CD8-positive, alpha-beta T cell (primary cell): ENCODE measurements at regions of chr17 and their contacts with region 1.

Region 1: GRCh38 chr17:57671667-57672632 is 73.1 kb downstream of the CCDC182 start:
- DNase-seq: peak; percentile 46 to 87 (median 75)
- ATAC-seq: peak; percentile 87
- H3K4me3 ChIP-seq: no peak overlapping the region
- H3K4me3 Mint-ChIP-seq: peak overlapping the region; percentile 54
- H3K27ac ChIP-seq: peak overlapping the region; percentile 28 to 45
- H3K27ac Mint-ChIP-seq: peak overlapping the region; percentile 91
- H3K4me1 ChIP-seq: peaks cover 36% of the 10 kb centered on the region
- H3K4me1 Mint-ChIP-seq: peaks cover 45% of the 10 kb centered on the region
- H3K27me3 ChIP-seq: no peaks in the 10 kb centered on the region
- H3K27me3 Mint-ChIP-seq: no peaks in the 10 kb centered on the region
- CTCF ChIP-seq: peak; percentile 81

Region 2: GRCh38 chr17:57130761-57131461 is 541.0 kb before region 1 on chr17:
- CTCF ChIA-PET with region 1: interaction called, 3 read pairs
- POLR2A ChIA-PET with region 1: no interaction called
- intact Hi-C with region 1: loop called in 1 of 2 experiments (anchors 1 kb)
- DNase-seq: peak; percentile 71 to 88 (median 85)
- ATAC-seq: peak; percentile 95
- H3K4me3 ChIP-seq: no peak overlapping the region
- H3K4me3 Mint-ChIP-seq: no peak overlapping the region
- H3K27ac ChIP-seq: no peak overlapping the region
- H3K27ac Mint-ChIP-seq: no peak overlapping the region
- H3K4me1 ChIP-seq: peaks cover 3% of the 10 kb centered on the region
- H3K4me1 Mint-ChIP-seq: peaks cover 9% of the 10 kb centered on the region
- H3K27me3 ChIP-seq: no peaks in the 10 kb centered on the region
- H3K27me3 Mint-ChIP-seq: no peaks in the 10 kb centered on the region
- CTCF ChIP-seq: peak; percentile 83

Region 3: DNA sequence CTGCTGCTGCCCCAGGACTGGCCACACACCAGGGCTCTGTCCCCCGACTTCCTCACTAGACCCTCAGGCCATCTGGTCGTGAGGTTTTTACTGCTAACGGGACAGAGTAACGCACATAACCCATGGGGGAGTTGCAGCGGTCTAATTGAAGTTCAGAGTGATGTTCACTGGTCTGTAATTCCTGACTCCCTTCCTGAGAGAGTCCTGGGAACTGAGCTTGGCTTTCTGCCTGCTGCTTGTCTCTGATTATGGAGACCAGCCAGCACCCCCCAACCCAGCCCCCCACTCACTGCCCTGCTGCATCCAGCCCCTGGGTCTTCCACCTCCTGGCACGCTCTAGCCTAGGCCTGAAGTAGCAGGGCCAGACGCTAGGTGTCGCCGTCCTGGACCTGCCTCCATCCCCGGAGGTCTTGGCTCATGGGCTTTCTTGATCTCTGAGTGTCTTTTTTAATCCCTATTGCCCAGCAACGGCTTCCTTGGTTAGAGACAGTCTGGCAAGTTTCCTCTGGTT is 119.8 kb before region 1 on chr17:
- CTCF ChIA-PET with region 1: interaction called, 12 read pairs
- POLR2A ChIA-PET with region 1: interaction called, 3 read pairs
- intact Hi-C with region 1: no loop called
- DNase-seq: peak in 6 of 9 experiments; percentile 8 to 60 (median 34)
- ATAC-seq: peak; percentile 63
- H3K4me3 ChIP-seq: no peak overlapping the region
- H3K4me3 Mint-ChIP-seq: no peak overlapping the region
- H3K27ac ChIP-seq: no peak overlapping the region
- H3K27ac Mint-ChIP-seq: no peak overlapping the region
- H3K4me1 ChIP-seq: peaks cover 26% of the 10 kb centered on the region
- H3K4me1 Mint-ChIP-seq: peaks cover 57% of the 10 kb centered on the region
- H3K27me3 ChIP-seq: no peaks in the 10 kb centered on the region
- H3K27me3 Mint-ChIP-seq: no peaks in the 10 kb centered on the region
- CTCF ChIP-seq: no peak

Region 4: GRCh38 chr17:57563964-57564363 is 108.0 kb before region 1 on chr17:
- CTCF ChIA-PET with region 1: no interaction called
- POLR2A ChIA-PET with region 1: no interaction called
- intact Hi-C with region 1: no loop called
- DNase-seq: no peak
- ATAC-seq: no peak
- H3K4me3 ChIP-seq: no peak overlapping the region
- H3K4me3 Mint-ChIP-seq: no peak overlapping the region
- H3K27ac ChIP-seq: no peak overlapping the region
- H3K27ac Mint-ChIP-seq: no peak overlapping the region
- H3K4me1 ChIP-seq: no peaks in the 10 kb centered on the region
- H3K4me1 Mint-ChIP-seq: peaks cover 9% of the 10 kb centered on the region
- H3K27me3 ChIP-seq: no peaks in the 10 kb centered on the region
- H3K27me3 Mint-ChIP-seq: no peaks in the 10 kb centered on the region
- CTCF ChIP-seq: no peak

Region 5: GRCh38 chr17:57597531-57598453 is 74.2 kb before region 1 on chr17:
- CTCF ChIA-PET with region 1: interaction called, 119 read pairs
- POLR2A ChIA-PET with region 1: interaction called, 16 read pairs
- intact Hi-C with region 1: loop called (anchors 1 kb)
- DNase-seq: peak in 5 of 9 experiments; percentile 33 to 66 (median 57)
- ATAC-seq: no peak
- H3K4me3 ChIP-seq: no peak overlapping the region
- H3K4me3 Mint-ChIP-seq: no peak overlapping the region
- H3K27ac ChIP-seq: peak overlapping the region in 1 of 2 experiments; percentile 32
- H3K27ac Mint-ChIP-seq: peak overlapping the region; percentile 89
- H3K4me1 ChIP-seq: peaks cover 52% of the 10 kb centered on the region
- H3K4me1 Mint-ChIP-seq: peaks cover 58% of the 10 kb centered on the region
- H3K27me3 ChIP-seq: no peaks in the 10 kb centered on the region
- H3K27me3 Mint-ChIP-seq: no peaks in the 10 kb centered on the region
- CTCF ChIP-seq: peak; percentile 64

Region 6: DNA sequence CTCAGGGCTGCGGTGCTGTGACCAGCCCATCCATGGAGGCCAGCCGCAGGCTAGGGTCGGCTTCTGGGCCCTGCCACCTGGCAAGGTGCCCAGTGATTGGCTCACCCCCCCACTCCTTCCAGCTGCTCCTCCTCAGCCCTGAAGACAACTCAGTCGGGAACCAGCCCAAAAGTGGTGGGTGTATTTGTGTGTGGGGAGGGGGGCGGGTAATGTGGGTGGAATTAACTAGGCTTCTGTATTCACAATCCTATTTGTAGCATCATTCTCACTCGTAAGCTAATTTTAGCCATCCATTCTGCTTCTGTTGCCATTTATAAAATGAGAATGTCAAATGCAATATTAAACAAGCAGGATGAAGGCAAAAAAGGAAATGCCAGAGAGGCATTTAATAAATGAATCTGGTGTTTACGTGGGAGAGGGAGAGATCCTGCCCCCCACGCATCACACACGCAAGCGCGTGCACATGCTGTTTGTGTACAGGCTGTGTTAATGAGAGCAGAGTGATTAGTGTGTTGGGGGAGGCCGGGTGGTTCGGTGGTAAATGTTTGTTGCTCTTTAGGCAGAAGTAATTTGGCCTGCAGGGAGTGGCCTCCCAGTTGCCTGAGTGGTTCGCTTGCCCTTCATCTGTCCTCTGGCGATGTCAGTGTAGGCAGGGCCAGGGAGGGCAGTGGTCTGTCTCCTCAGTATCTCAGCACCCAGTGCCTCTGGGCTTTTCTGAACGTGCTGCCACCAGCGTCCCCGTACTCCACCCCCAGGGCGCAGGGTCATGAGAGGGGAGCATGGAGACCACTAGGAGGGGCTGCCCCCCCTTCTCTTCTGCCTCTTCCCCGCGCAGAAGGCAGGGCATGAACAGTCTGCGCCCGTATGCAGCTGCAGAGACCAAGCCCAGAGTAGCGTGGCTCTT is 66.9 kb before region 1 on chr17:
- CTCF ChIA-PET with region 1: interaction called, 119 read pairs
- POLR2A ChIA-PET with region 1: interaction called, 16 read pairs
- intact Hi-C with region 1: no loop called
- DNase-seq: peak in 8 of 9 experiments; percentile 15 to 83 (median 60)
- ATAC-seq: peak; percentile 60
- H3K4me3 ChIP-seq: peak overlapping the region in 1 of 2 experiments; percentile 8
- H3K4me3 Mint-ChIP-seq: peak overlapping the region; percentile 76
- H3K27ac ChIP-seq: peak overlapping the region; percentile 67 to 81
- H3K27ac Mint-ChIP-seq: peak overlapping the region; percentile 94
- H3K4me1 ChIP-seq: peaks cover 99% of the 10 kb centered on the region
- H3K4me1 Mint-ChIP-seq: peaks cover 95% of the 10 kb centered on the region
- H3K27me3 ChIP-seq: no peaks in the 10 kb centered on the region
- H3K27me3 Mint-ChIP-seq: no peaks in the 10 kb centered on the region
- CTCF ChIP-seq: no peak

Region 7: GRCh38 chr17:57747221-57748017 is 75.5 kb after region 1 on chr17:
- CTCF ChIA-PET with region 1: interaction called, 13 read pairs
- POLR2A ChIA-PET with region 1: no interaction called
- intact Hi-C with region 1: loop called in 1 of 2 experiments (anchors 2 kb)
- DNase-seq: peak in 7 of 9 experiments; percentile 3 to 77 (median 52)
- ATAC-seq: peak; percentile 77
- H3K4me3 ChIP-seq: no peak overlapping the region
- H3K4me3 Mint-ChIP-seq: no peak overlapping the region
- H3K27ac ChIP-seq: no peak overlapping the region
- H3K27ac Mint-ChIP-seq: no peak overlapping the region
- H3K4me1 ChIP-seq: peaks cover 6% of the 10 kb centered on the region
- H3K4me1 Mint-ChIP-seq: peaks cover 10% of the 10 kb centered on the region
- H3K27me3 ChIP-seq: no peaks in the 10 kb centered on the region
- H3K27me3 Mint-ChIP-seq: no peaks in the 10 kb centered on the region
- CTCF ChIP-seq: peak; percentile 81